ENCODE measurements at regions of chr21 and their contacts with region 1.

Region 1: DNA sequence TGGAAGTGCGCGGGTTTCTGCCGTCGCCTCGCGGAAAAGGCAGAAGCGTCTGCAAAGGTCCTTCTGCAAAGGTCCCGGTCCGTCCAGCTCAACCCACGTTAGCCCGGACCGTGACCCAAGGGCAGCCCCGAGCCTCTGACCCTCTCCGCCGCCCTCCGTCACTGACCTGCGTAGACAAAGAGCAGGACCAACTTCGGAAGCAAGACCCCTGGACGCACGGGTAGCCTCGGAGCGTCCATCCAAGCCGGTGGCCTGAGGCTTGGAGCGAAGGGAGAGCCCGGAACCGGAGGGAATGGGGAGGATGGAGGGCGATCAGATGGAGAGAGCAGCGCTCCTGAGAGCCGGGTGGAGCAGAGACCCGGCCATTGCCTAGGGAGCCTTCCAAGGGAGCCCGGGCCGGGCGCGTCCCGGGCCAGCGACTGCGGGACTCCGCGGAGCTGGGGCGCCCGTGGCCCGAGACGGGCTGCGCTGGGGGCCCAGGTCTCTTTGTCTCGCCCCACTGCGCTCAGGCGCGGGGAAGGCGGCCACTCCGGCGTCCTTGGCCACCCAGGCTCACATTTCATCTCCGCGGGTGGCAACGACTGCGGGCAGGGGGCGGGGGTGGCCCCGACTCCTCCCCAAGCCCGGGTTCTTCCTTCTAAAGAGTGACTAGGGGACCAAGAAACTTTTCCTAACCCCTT is at the start of gene CYYR1:
- DNase-seq: peak; percentile 79
- total RNA-seq, gene CYYR1: 13.8 TPM

Region 2: GRCh38 chr21:25881525-25882376 is 691.1 kb before region 1 on chr21:
- intact Hi-C with region 1: loop called (anchors 10 kb)
- DNase-seq: peak; percentile 82

Region 3: DNA sequence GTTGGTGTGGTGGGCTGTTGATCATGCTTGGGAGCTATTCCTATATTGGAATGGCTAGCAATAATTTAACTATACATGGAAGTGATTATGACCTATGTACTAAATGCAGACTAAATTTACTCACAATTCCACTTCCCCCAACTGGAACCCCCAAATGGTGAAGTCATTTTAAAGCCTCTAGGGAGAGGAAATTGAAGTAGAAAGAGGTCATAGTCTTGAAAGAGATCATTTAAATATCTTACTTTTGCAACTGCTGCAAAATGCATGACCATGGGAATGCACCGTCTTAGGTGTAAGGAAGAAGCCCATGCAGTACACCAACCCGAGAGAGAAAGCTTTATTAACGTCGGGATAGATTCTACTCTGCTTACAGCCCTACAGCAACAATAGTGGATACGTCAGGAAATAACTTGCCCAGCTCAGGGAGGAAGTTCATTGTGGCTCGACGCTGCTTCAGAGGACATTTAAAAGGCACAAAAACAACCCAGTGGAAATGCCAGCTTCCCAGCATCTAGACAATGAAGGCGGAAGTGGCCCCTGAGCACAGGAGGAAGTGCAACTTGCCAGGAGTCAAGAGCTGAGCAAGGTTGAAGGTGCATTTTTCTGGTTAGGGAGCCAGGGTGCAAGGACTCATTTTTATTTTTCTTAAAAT is 26.3 kb before region 1 on chr21:
- intact Hi-C with region 1: loop called (anchors 2 kb)
- DNase-seq: peak; percentile 82

Measured in cardiac septum (tissue), 1 donor.